ENCODE measurements at regions of chr17 and their contacts with region 1.

Region 1: DNA sequence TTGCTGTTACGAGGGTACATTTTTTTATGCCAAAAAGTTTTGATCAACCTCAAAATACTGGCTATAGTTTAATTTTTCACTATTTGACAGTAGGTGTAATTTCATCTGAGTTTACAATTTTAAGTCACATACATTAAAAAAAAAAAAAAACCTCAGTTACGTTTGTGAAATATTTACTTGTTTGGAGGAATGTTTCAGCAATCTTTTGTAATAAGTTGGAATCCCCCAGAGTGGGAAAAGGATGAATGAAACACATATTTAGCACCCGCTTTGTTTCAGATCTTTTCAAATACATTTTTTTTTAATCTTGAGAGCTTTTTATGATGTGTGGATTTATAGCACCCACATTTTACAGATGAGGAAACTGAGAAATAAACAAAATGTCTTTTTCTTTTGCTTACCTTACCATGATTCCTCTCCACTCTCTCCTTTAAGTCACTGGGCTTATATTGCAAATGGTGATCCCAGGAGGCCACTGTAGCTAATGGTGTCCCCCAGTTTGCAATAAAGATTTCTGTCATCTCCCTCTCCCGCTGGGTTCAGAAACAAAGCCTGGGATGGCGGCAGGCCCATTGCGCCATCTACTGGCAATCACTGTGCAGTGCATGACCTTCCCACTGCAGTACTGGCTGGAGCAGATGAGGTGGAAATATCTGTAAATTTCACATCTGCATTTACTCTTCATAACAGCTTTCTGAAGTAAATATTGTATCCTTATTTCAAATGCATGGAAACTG is 27.7 kb downstream of the TBC1D3B start:
- DNase-seq: peak; percentile 45
- H3K4me3 ChIP-seq: no peak overlapping the region
- H3K27ac ChIP-seq: no peak overlapping the region
- H3K27me3 ChIP-seq: peaks cover 8% of the 10 kb centered on the region
- CTCF ChIP-seq: peak; percentile 100

Region 2: DNA sequence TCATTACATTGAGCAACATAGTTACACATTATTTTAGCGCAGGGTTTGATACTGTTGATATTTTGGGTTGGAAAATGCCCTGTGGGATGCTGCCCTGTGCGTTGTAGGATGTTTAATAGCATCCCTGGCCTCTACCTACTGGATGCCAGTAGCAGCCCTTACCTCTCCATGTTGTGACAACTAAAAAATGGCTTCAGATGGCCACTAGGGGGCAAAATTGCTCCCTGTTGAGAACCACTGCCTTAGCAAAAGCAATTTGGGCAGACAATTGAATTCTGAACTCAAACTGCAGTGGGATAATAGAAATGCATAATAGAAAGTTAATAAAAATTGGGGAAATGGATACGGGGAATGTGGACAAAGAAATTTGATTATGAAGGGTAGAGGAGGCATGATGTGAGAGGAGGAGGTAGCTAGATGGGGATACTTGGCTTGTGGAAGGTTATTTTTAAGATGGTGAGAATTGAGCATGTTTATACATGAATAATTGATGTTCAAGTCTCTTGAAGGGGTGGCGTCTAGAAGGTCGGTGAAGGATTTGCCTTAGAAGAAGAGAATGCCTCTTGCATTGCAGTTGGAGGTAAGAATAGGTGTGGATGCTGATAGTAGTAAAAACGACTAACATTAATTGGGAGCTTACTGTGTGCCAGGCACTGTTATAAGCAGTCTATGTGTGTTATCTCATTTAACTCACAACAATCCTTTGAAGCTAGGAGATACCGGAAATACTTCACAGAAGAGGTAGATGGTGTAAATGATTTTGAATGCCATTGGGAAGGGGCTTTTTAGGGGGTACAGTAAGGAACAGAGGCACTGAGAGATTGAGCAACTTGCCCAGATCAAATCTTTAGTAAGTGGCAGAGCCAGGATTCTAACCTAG is 299.0 kb before region 1 on chr17:
- CTCF ChIA-PET with region 1: interaction called, 12 read pairs
- POLR2A ChIA-PET with region 1: no interaction called
- DNase-seq: peak; percentile 32
- H3K4me3 ChIP-seq: no peak overlapping the region
- H3K27ac ChIP-seq: no peak overlapping the region
- H3K27me3 ChIP-seq: no peaks in the 10 kb centered on the region
- CTCF ChIP-seq: peak; percentile 85

Region 3: GRCh38 chr17:36072431-36073121 is 76.2 kb before region 1 on chr17:
- CTCF ChIA-PET with region 1: interaction called, 13 read pairs
- POLR2A ChIA-PET with region 1: no interaction called
- DNase-seq: no peak
- H3K4me3 ChIP-seq: no peak overlapping the region
- H3K27ac ChIP-seq: no peak overlapping the region
- H3K27me3 ChIP-seq: peaks cover 2% of the 10 kb centered on the region
- CTCF ChIP-seq: peak; percentile 53

Region 4: DNA sequence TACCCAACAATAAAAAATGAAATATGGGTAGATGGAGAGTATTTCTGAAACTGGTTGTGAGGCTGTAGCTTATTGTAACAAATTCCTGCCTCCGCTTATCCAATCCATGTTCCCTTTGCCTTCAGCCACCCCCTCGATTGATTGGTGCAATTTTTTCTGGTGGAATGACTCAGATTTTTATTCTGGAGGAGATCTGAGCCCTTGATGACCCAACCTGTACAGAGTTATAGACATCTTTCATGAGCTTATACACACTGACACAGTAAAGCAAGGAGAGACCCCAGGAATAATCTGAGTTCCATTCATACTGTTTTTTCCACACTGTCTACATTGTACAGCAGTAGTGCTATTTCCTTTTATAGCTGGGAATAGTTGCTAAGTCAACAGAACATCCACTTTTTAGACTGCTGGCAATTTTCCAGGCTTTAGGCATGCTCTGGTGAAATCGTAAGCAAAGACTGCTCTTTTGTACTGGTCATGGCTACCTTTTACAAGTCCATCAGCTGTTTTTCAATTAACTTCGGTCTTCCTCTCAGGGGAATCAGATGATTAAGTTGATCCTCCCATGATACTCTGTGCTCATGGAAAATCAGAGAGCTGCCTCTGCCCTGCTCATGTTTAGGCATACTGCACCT is 15.0 kb before region 1 on chr17:
- CTCF ChIA-PET with region 1: interaction called, 36 read pairs
- POLR2A ChIA-PET with region 1: no interaction called
- DNase-seq: no peak
- H3K4me3 ChIP-seq: no peak overlapping the region
- H3K27ac ChIP-seq: no peak overlapping the region
- H3K27me3 ChIP-seq: no peaks in the 10 kb centered on the region
- CTCF ChIP-seq: no peak

Region 5: DNA sequence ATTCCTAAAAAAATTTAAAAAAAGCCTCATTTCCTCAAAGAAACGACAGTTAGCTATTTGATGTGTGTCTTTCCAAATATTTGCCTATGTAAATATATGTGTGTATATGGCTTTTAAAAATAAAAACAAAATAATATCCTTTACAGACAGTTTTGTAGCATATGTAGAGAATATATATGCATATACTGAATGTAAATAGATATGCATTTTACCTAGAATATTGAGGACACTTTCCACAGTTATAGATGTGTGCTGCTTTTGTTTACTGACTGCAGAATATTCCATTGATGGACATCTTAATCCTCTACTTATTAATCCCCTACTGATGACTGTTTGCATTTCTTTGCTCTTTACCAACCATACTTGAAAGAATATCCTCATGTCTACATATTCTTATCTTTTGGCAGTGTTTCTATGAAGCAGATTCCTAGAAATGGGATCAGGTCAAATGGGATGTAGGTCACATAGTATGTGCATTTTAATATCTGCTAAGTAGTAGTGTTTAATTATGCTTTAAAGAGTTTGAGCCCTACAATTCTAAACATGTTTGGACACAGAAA is 44.6 kb after region 1 on chr17:
- CTCF ChIA-PET with region 1: interaction called, 18 read pairs
- POLR2A ChIA-PET with region 1: no interaction called
- DNase-seq: no peak
- H3K4me3 ChIP-seq: no peak overlapping the region
- H3K27ac ChIP-seq: no peak overlapping the region
- H3K27me3 ChIP-seq: no peaks in the 10 kb centered on the region
- CTCF ChIP-seq: no peak